MCF 10A (cell line): ENCODE measurements at regions of chr17 and their contacts with region 1.

Region 1: DNA sequence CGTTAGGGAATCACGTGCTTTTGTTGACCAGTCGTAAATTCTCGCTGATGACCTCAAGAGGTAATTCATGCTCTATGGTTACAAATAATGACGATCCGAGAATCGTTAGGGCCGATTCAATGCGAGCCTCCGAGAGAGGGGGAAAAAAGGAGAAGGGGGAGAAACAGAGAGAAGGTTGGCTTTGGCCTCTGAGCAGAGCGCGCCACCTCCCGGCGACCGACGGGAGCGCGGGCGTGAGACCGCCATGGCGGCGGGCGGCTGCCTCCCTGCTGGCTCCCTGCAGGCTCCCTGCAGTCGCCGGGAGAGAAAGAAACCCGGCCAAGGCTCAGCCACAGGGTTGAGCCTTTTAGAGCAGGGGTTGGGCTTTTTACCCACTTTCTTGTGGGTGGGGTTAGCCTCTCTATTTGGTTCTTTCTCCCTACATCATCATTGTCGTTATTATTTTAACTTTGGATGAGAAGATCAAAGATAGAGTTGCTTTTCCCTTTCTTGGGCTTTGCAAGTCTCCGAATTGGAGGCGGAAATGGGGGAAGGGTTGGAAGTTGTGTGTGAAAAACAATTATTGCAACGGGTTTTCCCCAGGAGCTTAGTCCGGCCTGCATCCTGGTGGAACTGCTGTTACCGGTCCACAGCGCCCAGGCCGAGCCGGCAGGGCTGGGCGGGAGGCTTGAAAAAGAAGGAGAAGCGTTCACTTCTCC is 410 bp upstream of the HOXB5 start:
- DNase-seq: peak; percentile 72
- H3K4me3 Mint-ChIP-seq: peak overlapping the region; percentile 65
- H3K27ac Mint-ChIP-seq: no peak overlapping the region
- H3K4me1 Mint-ChIP-seq: no peaks in the 10 kb centered on the region
- H3K27me3 Mint-ChIP-seq: peaks cover 26% of the 10 kb centered on the region
- CTCF ChIP-seq: peak; percentile 97

Region 2: DNA sequence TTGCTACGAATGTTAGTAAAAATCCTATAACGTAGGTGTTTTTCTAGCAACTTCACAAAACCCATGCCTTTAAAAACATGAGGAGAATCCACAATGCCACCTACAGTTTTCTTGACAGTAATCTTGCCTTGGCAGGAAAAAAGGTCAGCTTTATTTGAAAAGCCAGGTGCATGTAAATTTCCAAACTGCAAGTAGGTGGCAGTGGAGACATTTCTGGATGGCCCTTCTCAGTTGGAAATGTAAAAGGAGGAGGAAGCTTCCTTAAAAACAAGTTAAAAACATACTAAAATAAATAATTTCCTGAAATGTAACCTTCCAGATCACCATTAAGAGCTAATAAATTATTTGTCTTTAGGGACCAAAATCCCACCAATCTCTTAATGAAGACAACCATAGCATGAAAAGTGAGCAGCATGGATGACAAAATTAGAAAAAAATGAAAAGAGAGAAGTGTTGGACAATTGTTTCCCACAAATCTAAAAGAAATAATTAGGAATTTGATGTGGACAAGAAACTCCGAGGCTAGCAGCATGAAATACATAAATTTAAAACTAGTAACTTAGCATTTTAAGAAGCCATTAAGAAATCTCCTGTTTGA is 334.2 kb before region 1 on chr17:
- CTCF ChIA-PET with region 1: interaction called, 10 read pairs
- POLR2A ChIA-PET with region 1: no interaction called
- intact Hi-C with region 1: no loop called
- DNase-seq: peak; percentile 52
- H3K4me3 Mint-ChIP-seq: no peak overlapping the region
- H3K27ac Mint-ChIP-seq: no peak overlapping the region
- H3K4me1 Mint-ChIP-seq: no peaks in the 10 kb centered on the region
- H3K27me3 Mint-ChIP-seq: peaks cover 53% of the 10 kb centered on the region
- CTCF ChIP-seq: peak; percentile 39

Region 3: DNA sequence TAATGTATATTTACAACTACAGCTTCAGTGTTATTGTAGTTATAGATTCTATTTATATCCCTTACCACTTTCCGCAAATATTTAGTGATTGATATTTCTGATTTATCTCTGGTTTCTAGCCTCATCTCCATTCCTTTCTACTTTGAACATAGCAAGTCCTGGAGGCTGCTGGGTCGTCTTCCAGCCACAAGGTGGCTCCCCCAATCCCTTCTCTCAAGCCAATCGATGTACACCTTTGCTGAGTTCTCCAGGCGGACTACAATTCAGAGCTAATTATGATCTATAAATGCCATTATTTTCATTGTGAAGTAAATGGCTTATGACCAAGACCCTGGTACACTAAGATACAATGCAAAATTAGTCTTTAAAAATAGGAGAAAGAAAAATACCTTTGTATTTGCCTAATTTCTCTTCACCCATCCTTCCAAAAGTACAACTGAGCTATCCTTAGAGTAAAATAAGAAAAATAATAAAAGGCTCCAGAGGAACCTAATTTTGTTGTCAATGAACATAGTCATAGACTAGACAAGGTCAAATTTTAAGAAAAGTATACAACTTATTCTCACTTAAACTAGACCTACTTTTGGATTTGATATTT is 286.1 kb before region 1 on chr17:
- CTCF ChIA-PET with region 1: interaction called, 17 read pairs
- POLR2A ChIA-PET with region 1: interaction called, 3 read pairs
- intact Hi-C with region 1: no loop called
- DNase-seq: peak; percentile 58
- H3K4me3 Mint-ChIP-seq: no peak overlapping the region
- H3K27ac Mint-ChIP-seq: no peak overlapping the region
- H3K4me1 Mint-ChIP-seq: no peaks in the 10 kb centered on the region
- H3K27me3 Mint-ChIP-seq: peaks cover 94% of the 10 kb centered on the region
- CTCF ChIP-seq: peak; percentile 74

Region 4: DNA sequence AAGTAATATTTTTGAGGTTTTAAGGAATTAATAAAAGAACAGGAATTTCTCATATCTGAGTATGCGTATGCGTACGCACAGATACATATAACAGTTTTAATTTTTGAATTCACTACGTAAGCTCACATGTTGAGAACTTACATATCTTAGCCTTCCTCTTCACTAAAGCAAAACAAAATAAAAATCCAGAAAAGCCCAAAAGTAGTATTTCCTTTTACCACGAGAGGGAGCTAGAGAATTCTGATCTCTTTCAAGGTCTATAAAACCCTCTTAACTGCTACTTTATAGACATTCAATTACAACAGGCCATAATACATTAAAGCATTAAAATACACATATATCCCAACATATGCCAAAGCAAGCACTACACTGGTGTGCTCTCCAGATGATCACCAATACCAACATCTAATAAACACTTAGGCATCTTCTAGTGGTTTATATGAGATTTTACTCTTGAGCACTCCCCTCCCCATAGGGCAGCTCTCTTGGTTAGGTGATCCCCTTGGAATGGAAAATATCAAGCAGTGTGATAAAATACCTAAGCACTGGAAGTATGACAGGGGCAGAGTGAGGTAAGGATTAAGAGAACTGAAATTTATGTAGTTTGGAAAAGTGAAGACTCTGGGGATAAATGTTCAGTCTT is 258.0 kb before region 1 on chr17:
- CTCF ChIA-PET with region 1: interaction called, 18 read pairs
- POLR2A ChIA-PET with region 1: no interaction called
- intact Hi-C with region 1: loop called (anchors 2 kb)
- DNase-seq: peak; percentile 59
- H3K4me3 Mint-ChIP-seq: no peak overlapping the region
- H3K27ac Mint-ChIP-seq: no peak overlapping the region
- H3K4me1 Mint-ChIP-seq: no peaks in the 10 kb centered on the region
- H3K27me3 Mint-ChIP-seq: peaks cover 67% of the 10 kb centered on the region
- CTCF ChIP-seq: peak; percentile 48

Region 5: GRCh38 chr17:48351831-48352332 is 242.1 kb before region 1 on chr17:
- CTCF ChIA-PET with region 1: interaction called, 23 read pairs
- POLR2A ChIA-PET with region 1: no interaction called
- intact Hi-C with region 1: no loop called
- DNase-seq: peak; percentile 26
- H3K4me3 Mint-ChIP-seq: no peak overlapping the region
- H3K27ac Mint-ChIP-seq: no peak overlapping the region
- H3K4me1 Mint-ChIP-seq: no peaks in the 10 kb centered on the region
- H3K27me3 Mint-ChIP-seq: peaks cover 37% of the 10 kb centered on the region
- CTCF ChIP-seq: peak; percentile 68

Region 6: GRCh38 chr17:48492401-48493298 is 101.3 kb before region 1 on chr17:
- CTCF ChIA-PET with region 1: interaction called, 14 read pairs
- POLR2A ChIA-PET with region 1: no interaction called
- intact Hi-C with region 1: no loop called
- DNase-seq: peak; percentile 43
- H3K4me3 Mint-ChIP-seq: no peak overlapping the region
- H3K27ac Mint-ChIP-seq: no peak overlapping the region
- H3K4me1 Mint-ChIP-seq: peaks cover 9% of the 10 kb centered on the region
- H3K27me3 Mint-ChIP-seq: no peaks in the 10 kb centered on the region
- CTCF ChIP-seq: peak; percentile 86

Region 7: GRCh38 chr17:48630925-48631692 is 37.1 kb after region 1 on chr17:
- CTCF ChIA-PET with region 1: no interaction called
- POLR2A ChIA-PET with region 1: no interaction called
- intact Hi-C with region 1: no loop called
- DNase-seq: no peak
- H3K4me3 Mint-ChIP-seq: no peak overlapping the region
- H3K27ac Mint-ChIP-seq: no peak overlapping the region
- H3K4me1 Mint-ChIP-seq: no peaks in the 10 kb centered on the region
- H3K27me3 Mint-ChIP-seq: peaks cover 92% of the 10 kb centered on the region
- CTCF ChIP-seq: no peak